GM10248 (cell line): ENCODE measurements at regions of chr18 and their contacts with region 1.

Region 1: GRCh38 chr18:51171223-51171622 is 26.3 kb downstream of the MEX3C start:
- DNase-seq: no peak
- CTCF ChIP-seq: no peak

Region 2: DNA sequence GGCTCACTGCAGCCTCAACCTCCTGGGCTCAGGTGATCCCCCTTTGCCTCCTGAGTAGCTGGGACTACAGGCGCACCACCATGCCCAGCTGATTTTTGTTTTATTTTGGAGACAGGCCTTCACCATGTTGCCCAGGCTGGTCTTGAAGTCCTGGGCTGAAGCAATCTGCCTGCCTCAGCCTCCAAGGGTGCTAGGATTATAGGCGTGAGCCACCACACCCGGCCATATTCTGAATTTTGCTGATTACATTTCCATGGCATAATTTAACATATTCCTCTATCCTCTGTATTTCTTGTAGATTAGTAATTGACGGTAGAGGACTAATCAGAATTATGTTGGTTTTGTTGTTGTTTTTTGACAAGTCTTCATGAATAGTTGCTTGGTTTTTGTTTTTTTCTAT is 24.3 kb before region 1 on chr18:
- CTCF ChIA-PET with region 1: no interaction called
- POLR2A ChIA-PET with region 1: no interaction called
- DNase-seq: no peak
- CTCF ChIP-seq: no peak

Region 3: DNA sequence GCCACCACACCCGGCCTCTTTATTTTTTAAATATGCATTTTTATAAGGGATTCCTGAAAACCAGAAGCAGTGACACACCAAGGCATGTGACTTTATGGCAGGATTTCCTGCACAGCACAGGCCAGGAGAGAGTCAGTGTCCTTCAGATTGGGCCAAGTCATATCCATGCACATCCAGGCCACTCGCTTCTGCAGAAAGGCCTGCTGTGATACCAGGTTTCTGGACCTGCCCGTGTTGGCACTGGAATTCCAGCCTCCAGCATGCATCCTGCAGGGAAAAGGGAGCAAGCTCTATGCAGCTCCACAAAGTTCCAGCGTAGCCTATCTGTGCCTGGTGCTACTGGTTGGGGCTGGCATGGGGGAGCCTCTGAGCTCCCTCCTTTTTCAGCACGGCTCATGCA is 10.6 kb before region 1 on chr18:
- CTCF ChIA-PET with region 1: interaction called, 11 read pairs
- POLR2A ChIA-PET with region 1: no interaction called
- DNase-seq: no peak
- CTCF ChIP-seq: no peak

Region 4: GRCh38 chr18:51188024-51188701 is 16.9 kb after region 1 on chr18:
- CTCF ChIA-PET with region 1: interaction called, 10 read pairs
- POLR2A ChIA-PET with region 1: no interaction called
- DNase-seq: no peak
- CTCF ChIP-seq: no peak